Posterior vena cava (tissue), 2 donors: ENCODE measurements at regions of chr6 and their contacts with region 1.

Region 1: DNA sequence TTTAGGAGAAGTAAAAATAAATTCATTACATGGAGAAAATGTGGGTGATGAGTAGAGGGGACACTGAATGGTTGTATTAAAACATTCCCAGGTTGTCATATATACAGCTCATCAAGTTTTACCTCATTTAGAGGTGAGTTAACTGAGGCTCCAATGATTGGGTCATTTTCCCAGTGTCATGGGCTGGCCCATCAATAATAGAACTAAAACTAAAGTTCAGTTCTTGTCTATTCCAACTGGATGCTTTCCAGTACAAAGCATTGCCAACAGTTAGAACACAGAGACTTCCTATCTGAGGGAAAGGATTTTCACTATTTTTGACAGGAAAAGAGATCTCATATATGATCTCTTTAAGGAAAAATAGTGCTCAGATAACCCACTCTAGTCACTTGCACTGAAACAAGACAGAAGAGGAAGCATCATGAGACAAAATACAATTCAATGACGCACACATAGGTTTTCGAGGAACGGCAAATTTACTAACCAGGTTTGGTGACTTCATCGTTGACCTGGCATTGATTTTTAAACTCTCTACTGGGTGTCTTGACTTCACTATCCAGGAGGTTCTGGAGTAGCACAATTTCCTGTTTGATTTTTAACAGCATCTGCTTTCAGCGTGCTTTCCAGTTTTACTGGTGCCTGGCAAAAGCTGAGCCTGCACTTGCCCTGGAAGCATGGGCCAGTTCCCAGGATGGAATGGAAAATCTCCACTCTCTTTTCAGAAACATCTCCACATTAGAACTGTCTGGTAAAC is 195.5 kb upstream of the FBXL4 start:
- DNase-seq: no peak

Region 2: GRCh38 chr6:98581705-98582104 is 561.6 kb before region 1 on chr6:
- intact Hi-C with region 1: no loop called
- DNase-seq: no peak

Region 3: GRCh38 chr6:98970469-98970868 is 172.8 kb before region 1 on chr6:
- intact Hi-C with region 1: no loop called
- DNase-seq: no peak

Region 4: GRCh38 chr6:98980814-98981213 is 162.5 kb before region 1 on chr6:
- intact Hi-C with region 1: loop called in 1 of 2 experiments (anchors 10 kb)
- DNase-seq: no peak

Region 5: GRCh38 chr6:99026135-99026534 is 117.2 kb before region 1 on chr6:
- intact Hi-C with region 1: no loop called
- DNase-seq: no peak

Region 6: GRCh38 chr6:99219788-99220187 is 76.5 kb after region 1 on chr6:
- intact Hi-C with region 1: no loop called
- DNase-seq: no peak

Region 7: GRCh38 chr6:99232056-99232455 is 88.8 kb after region 1 on chr6:
- intact Hi-C with region 1: loop called in 1 of 2 experiments (anchors 5 kb)
- DNase-seq: no peak